Activated T-helper 1 cell treated with anti-CD3 and anti-CD28 coated beads, Interleukin-12 subunit alpha, Interleukin-12 subunit beta, Interleukin-2, Interleukin-4 antibody, amounts not matched to agents 30 ng/mL and 10 ng/mL and 1 ng/mL, durations not matched to agents 14 hours and 24 hours and 36 hours (primary cell): ENCODE measurements at regions of chr7 and their contacts with region 1.

Region 1: GRCh38 chr7:142811154-142811737 is 40.5 kb downstream of the PRSS2 start:
- DNase-seq: no peak
- H3K4me3 Mint-ChIP-seq: peak overlapping the region; percentile 79
- H3K27ac Mint-ChIP-seq: peak overlapping the region; percentile 99
- H3K4me1 Mint-ChIP-seq: peaks cover 80% of the 10 kb centered on the region
- H3K27me3 Mint-ChIP-seq: peaks cover 2% of the 10 kb centered on the region

Region 2: GRCh38 chr7:141737834-141738591 is 1073.2 kb before region 1 on chr7 and contains the start of gene SSBP1:
- intact Hi-C with region 1: loop called (anchors 5 kb)
- DNase-seq: peak; percentile 91
- H3K4me3 Mint-ChIP-seq: peak within 1 kb of the TSS; percentile 94
- H3K27ac Mint-ChIP-seq: peak within 1 kb of the TSS; percentile 96
- H3K4me1 Mint-ChIP-seq: peaks cover 24% of the 10 kb centered on the region
- H3K27me3 Mint-ChIP-seq: no peaks in the 10 kb centered on the region
- total RNA-seq, gene SSBP1: 240 and 245 TPM in 2 replicates

Region 3: GRCh38 chr7:142338633-142339501 is 472.4 kb before region 1 on chr7:
- intact Hi-C with region 1: no loop called
- DNase-seq: no peak
- H3K4me3 Mint-ChIP-seq: no peak overlapping the region
- H3K27ac Mint-ChIP-seq: peak overlapping the region; percentile 5
- H3K4me1 Mint-ChIP-seq: peaks cover 5% of the 10 kb centered on the region
- H3K27me3 Mint-ChIP-seq: peaks cover 8% of the 10 kb centered on the region

Region 4: DNA sequence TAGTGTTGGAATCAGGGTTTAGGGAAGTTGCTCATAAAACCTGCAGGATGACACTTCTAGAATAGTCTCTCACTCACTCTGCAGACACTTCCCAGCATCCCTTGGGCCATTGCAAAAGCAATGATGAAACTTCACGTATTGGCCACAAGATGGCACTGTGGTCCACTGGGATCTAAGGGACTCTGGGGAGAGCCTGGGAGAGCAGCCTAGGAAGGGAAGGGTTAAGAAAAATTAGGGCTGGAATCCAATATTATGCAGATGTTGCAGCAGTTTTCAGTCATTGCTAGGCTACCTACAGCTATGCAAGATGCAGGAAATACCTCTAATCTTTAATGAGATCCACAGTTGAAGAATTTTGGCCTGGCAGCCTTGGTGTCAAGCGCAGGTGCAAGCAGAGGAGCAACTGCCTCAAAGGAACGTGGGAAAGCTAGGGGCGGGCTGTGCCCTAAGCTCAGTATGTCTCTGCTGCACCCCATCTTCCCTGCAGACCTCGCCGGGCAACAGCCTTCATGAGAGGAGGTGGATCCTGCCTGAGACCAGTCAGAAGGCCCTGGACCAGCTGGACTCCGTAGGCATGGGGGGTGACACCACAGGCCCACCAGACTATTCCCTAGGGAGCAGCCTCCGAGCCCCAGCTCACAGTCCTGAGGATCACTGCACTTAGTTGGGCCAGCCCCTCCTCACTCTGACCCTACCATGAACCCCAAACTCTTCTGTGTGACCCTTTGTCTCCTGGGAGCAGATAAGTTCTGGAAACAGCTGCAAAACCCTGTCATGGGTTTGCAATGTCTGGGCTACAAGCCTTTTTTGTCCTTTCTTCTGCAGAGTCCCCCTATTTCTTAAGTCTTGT is 425.5 kb before region 1 on chr7:
- intact Hi-C with region 1: loop called (anchors 2 kb)
- DNase-seq: peak; percentile 27
- H3K4me3 Mint-ChIP-seq: peak overlapping the region; percentile 65
- H3K27ac Mint-ChIP-seq: peak overlapping the region; percentile 2
- H3K4me1 Mint-ChIP-seq: peaks cover 21% of the 10 kb centered on the region
- H3K27me3 Mint-ChIP-seq: peaks cover 2% of the 10 kb centered on the region

Region 5: GRCh38 chr7:142587578-142588191 is 223.6 kb before region 1 on chr7:
- intact Hi-C with region 1: loop called (anchors 1 kb)
- DNase-seq: no peak
- H3K4me3 Mint-ChIP-seq: no peak overlapping the region
- H3K27ac Mint-ChIP-seq: no peak overlapping the region
- H3K4me1 Mint-ChIP-seq: peaks cover 9% of the 10 kb centered on the region
- H3K27me3 Mint-ChIP-seq: no peaks in the 10 kb centered on the region

Region 6: DNA sequence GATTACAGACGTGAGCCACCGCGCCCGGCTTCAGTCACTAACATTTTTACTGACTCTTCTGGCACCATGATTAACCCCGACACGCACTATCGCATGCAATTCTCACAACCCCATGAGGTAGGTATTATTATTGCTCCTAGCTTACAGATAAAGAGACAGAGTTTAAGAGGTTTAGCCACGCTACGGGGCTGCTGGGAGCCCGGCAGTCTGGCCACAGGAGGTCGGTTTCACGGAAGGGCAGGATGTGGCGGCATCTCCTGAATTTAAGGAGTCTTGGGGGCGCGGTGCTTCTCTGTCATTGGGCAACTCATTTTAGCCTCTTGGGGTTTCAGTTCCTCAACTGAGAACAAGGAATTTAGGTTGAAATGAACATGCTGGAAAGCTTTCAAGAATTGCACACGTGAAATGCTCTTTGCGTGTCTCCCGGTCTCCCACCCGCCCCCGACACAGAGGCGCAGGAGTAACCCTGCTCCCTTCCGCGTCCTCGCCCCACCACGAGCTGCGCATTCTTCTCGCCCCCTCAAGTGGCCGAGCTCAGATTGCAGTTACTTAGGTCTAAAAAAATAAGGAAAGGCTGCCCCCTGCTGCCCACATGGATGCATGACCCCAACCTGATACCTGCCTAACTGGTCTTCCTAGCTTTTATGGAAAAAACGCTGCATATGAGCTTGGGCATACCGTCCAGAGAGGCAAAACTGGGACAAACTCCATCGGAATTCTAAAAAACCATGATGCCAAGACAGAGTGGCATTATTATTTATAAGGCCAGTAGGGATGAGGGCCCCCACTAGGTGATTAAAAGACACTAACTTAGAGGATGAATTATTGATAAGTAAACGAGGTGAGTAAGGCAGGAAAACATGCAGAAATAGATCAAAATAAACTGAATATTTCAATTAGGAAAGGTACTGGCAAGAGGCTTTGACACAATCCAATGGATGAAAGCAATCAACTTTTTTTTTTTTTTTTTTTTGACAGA is 28.0 kb before region 1 on chr7:
- intact Hi-C with region 1: loop called (anchors 1 kb)
- DNase-seq: peak; percentile 63
- H3K4me3 Mint-ChIP-seq: peak overlapping the region; percentile 75
- H3K27ac Mint-ChIP-seq: peak overlapping the region; percentile 87
- H3K4me1 Mint-ChIP-seq: peaks cover 11% of the 10 kb centered on the region
- H3K27me3 Mint-ChIP-seq: no peaks in the 10 kb centered on the region

Region 7: GRCh38 chr7:143263266-143264195 is 452.3 kb after region 1 on chr7 and contains the start of gene GSTK1:
- intact Hi-C with region 1: loop called (anchors 5 kb)
- DNase-seq: peak; percentile 81
- H3K4me3 Mint-ChIP-seq: peak within 1 kb of the TSS; percentile 98
- H3K27ac Mint-ChIP-seq: peak within 1 kb of the TSS; percentile 94
- H3K4me1 Mint-ChIP-seq: peaks cover 67% of the 10 kb centered on the region
- H3K27me3 Mint-ChIP-seq: no peaks in the 10 kb centered on the region
- total RNA-seq, gene GSTK1: 134 and 135 TPM in 2 replicates